ENCODE measurements at regions of chr6 and their contacts with region 1.

Region 1: GRCh38 chr6:108782179-108783041 is 65.8 kb upstream of the ARMC2 start:
- DNase-seq: peak; percentile 90
- ATAC-seq: peak; percentile 95

Region 2: DNA sequence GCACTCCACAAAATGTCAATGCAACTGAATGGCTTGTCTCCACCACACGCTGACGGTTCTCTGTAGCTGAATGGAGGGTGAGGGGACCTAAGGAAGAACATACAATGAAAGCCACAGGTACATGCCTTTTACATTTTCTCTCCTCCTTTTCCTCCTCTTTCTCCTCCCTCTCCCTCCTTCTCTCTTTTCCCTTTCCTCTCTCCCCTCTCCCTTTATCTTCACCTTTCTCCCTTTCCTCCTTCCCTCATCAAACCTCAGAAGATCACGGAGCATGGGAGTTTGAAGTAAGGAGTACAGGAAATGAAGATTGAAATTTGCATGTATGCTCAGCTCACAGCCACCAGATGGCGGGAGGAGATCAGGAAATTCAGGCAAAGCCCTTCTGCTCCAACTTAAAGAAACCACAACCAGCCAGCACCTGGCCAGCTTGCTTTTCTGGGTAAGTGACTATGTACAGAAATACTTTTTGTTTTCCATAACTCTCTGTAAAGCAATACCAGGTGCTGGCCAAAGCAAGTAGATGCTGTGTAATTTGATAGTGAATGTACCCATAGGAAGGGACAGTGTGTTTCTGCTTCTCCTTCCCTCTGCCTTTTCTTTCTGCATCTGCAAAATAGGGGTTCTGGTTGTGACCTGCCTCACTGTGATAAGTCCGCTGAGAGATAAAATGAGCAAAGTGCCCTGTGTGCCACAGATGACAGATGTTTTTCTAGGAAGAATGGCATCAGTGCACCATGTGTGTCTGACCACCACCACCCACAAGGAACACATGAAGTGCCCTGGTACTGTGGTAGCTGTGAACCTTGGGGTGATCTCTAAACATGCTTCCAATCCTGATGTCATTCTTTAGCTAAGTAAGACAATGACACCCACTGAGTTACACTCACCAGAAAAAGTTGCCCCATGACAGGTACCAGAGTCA is 240.3 kb before region 1 on chr6:
- intact Hi-C with region 1: loop called (anchors 5 kb)
- DNase-seq: peak; percentile 67
- ATAC-seq: peak; percentile 91

Region 3: DNA sequence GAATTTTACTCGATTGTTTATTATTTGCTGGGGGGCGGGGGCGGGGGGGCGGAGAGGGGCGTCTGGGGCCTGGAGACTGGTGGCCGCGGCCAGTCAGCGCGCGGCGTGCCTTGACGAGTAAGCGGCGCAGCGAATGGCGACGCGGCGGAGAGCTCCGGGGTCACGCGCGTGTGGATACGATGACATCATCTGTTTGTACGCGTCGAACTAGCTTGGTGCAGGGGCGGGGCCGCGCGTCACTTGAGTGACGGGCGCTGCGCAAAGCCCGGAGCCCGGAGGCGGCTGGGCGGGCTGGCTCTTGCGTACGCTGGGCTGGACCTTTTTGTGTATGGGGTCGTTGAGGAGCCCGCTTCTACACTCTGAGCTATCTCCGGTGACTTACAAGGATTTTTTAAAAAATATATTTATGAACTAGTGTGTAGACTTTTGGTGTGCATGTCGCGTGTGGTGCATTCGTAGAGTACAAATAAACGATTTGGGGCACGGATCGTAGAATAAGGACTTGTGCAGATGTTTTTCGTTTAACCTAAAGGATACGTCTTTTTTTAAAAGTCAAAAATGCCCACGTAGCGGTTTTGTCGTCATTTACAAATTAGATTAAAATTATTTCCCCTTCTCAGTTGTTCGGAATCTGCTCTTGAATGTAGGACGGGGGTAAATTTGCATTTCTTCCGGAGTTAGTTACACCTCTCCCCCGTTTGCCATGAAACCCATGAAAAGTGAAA is 223.9 kb before region 1 on chr6:
- intact Hi-C with region 1: loop called (anchors 5 kb)
- DNase-seq: peak; percentile 99
- ATAC-seq: peak; percentile 65

Region 4: GRCh38 chr6:108707328-108707960 is 75.0 kb before region 1 on chr6:
- intact Hi-C with region 1: no loop called
- DNase-seq: no peak
- ATAC-seq: no peak

Region 5: DNA sequence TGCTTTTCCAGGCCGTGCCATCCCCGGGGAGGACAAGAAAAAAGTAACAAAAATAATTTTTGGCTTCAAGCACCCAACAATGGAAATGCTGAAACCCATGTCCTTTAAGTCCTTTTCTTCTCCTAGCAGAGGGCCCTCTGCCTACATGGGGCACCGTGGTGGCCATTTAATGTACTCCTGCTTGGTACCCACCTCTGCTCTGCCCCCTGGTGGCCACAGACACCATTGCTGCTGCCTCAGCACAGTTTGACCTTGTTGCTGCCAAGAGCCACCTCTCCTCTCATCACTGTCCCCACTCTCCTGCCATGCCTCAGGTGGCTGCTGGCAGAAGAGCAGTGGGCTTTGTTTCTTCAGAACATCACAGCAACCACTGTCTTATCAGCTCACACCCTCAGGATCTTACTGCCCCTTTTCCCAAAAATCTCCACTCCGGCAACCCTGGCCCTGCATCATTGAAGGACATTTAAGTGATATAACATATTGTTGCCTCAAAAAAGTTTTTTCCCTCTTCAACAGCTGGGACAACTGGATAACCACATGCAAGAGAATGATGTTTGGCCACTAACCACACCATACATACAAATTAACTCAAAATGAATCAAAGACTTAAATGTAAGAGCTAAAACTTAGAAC is 52.9 kb after region 1 on chr6:
- intact Hi-C with region 1: loop called (anchors 10 kb)
- DNase-seq: peak; percentile 94
- ATAC-seq: peak; percentile 97

Region 6: DNA sequence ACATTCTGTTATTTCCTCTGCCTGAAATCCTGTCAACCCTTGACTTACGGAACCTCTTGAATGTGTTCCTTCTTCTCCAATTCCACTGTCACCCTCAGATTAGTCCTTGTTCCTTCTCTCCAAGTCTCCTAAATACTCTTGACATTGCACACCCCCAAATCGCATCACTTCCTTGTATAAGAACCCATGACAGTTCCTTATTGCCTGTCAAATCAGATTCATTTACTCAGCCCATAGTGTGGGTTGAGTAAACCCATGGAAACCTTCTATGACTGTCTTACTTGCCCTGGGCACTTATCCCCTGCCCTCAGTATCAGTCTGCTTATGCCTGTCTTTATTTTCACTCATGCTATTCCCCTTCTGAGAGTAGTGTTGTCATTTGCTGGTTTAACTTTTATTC is 106.3 kb after region 1 on chr6:
- intact Hi-C with region 1: loop called (anchors 5 kb)
- DNase-seq: no peak
- ATAC-seq: no peak

Measured in Right ventricle myocardium superior (tissue), 1 donor.